Mammary epithelial cell (primary cell): ENCODE measurements at regions of chr10 and their contacts with region 1.

Region 1: GRCh38 chr10:12614177-12614995 is 265.0 kb downstream of the CAMK1D start:
- DNase-seq: no peak
- H3K4me3 ChIP-seq: no peak overlapping the region
- H3K27ac ChIP-seq: no peak overlapping the region
- H3K4me1 ChIP-seq: no peaks in the 10 kb centered on the region
- H3K27me3 ChIP-seq: no peaks in the 10 kb centered on the region
- CTCF ChIP-seq: no peak

Region 2: DNA sequence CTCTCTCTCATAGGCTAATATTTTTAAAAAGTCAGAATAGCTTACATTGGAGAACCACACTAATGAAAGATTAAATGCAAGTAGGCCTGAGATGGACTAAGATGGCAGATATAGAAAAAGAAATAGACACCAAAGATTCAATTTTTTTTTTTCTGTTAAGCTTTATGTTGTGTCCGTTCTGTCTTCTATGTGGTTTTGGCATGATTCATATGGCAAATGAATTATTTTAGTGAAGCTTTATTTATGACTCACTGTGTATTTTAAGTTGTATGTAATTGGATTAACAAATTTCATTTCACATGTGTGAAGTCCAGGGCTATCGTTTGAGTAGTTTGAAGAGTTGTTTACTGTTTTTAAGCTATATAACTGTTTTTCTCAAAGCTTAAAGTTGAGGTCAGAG is 50.2 kb before region 1 on chr10:
- CTCF ChIA-PET with region 1: no interaction called
- dilution Hi-C with region 1: loop called (anchors 5 kb)
- in situ Hi-C with region 1: no loop called
- intact Hi-C with region 1: no loop called
- DNase-seq: peak; percentile 24
- H3K4me3 ChIP-seq: no peak overlapping the region
- H3K27ac ChIP-seq: no peak overlapping the region
- H3K4me1 ChIP-seq: no peaks in the 10 kb centered on the region
- H3K27me3 ChIP-seq: no peaks in the 10 kb centered on the region
- CTCF ChIP-seq: no peak

Region 3: DNA sequence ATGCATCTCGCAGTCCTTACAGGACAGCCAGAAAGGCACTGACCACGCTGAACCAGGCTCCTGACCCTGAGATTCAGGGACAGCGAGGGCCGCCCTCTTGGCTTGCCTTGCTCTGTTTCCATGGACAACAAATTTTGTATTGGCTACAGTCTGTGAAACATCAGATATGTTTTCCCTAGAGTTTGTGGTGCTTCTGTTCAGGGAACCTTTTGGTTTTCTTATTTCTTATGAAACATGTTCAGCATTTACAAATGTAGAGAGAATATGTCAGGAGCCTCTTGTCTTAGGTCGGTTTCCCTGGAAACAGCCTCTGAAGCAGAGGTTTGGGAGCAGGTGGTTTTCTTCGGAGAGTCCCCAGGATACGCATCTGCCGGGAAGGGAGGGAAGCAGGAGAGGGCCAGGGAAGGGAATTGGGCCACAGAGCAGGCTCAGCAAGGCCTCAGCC is 127.0 kb after region 1 on chr10:
- CTCF ChIA-PET with region 1: no interaction called
- dilution Hi-C with region 1: no loop called
- in situ Hi-C with region 1: no loop called
- intact Hi-C with region 1: no loop called
- DNase-seq: no peak
- H3K4me3 ChIP-seq: no peak overlapping the region
- H3K27ac ChIP-seq: no peak overlapping the region
- H3K4me1 ChIP-seq: no peaks in the 10 kb centered on the region
- H3K27me3 ChIP-seq: no peaks in the 10 kb centered on the region
- CTCF ChIP-seq: no peak